Activated T-helper 2 cell treated with anti-CD3 and anti-CD28 coated beads, Interferon-gamma antibody, Interleukin-2, Interleukin-4, amounts not matched to agents 10 μg/mL and 5 μg/mL and 100 μg/mL, durations not matched to agents 14 hours and 24 hours and 36 hours (primary cell): ENCODE measurements at regions of chr10 and their contacts with region 1.

Region 1: GRCh38 chr10:119596537-119597404 is at the start of gene TIAL1:
- DNase-seq: peak; percentile 89
- H3K4me3 Mint-ChIP-seq: peak within 1 kb of the TSS; percentile 95
- H3K27ac Mint-ChIP-seq: peak within 1 kb of the TSS; percentile 95
- H3K4me1 Mint-ChIP-seq: peaks cover 42% of the 10 kb centered on the region
- H3K27me3 Mint-ChIP-seq: no peaks in the 10 kb centered on the region
- total RNA-seq, gene TIAL1: 183 and 184 TPM in 2 replicates

Region 2: GRCh38 chr10:119080521-119081260 is 516.1 kb before region 1 on chr10 and contains the start of gene EIF3A:
- intact Hi-C with region 1: loop called (anchors 1 kb)
- DNase-seq: peak; percentile 94
- H3K4me3 Mint-ChIP-seq: peak within 1 kb of the TSS; percentile 93
- H3K27ac Mint-ChIP-seq: peak within 1 kb of the TSS; percentile 93
- H3K4me1 Mint-ChIP-seq: peaks cover 35% of the 10 kb centered on the region
- H3K27me3 Mint-ChIP-seq: no peaks in the 10 kb centered on the region
- total RNA-seq, gene EIF3A: 161 and 164 TPM in 2 replicates

Region 3: DNA sequence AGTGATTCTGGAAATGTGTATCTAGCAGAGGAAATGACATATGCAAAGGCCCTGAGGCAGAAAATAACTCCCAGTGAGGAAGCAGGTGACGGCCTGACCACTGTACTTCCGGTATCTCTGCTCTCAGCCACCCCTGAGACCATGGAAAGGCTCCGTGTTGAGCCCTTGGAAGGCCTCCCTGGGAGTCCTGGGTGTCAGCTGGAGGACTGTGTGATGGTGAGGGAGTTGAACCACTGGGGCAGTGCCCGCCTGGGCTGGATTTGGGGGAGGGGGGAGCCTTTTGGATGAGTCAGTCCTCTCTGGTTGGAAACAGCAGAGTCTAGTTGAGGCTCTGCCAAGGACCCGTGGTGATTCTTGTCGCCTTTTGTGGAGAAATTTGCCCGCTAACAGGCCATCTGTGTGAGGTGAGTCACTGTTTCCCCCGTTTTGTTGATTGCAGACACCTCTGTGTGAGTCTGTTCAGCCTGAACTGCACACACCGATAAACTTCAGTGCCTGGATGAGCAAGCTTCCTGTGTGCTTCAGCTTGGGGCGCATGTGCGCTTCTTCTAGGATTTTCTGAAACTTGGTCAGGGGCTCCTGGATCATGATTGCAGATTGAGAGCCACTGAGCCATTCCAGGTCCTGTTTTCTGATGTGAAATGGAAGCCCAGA is 290.8 kb before region 1 on chr10:
- intact Hi-C with region 1: loop called (anchors 5 kb)
- DNase-seq: peak; percentile 85
- H3K4me3 Mint-ChIP-seq: peak overlapping the region; percentile 74
- H3K27ac Mint-ChIP-seq: peak overlapping the region; percentile 100
- H3K4me1 Mint-ChIP-seq: peaks cover 70% of the 10 kb centered on the region
- H3K27me3 Mint-ChIP-seq: peaks cover 4% of the 10 kb centered on the region

Region 4: GRCh38 chr10:119542988-119543813 is 53.6 kb before region 1 on chr10:
- intact Hi-C with region 1: loop called (anchors 1 kb)
- DNase-seq: peak; percentile 52
- H3K4me3 Mint-ChIP-seq: peak overlapping the region; percentile 88
- H3K27ac Mint-ChIP-seq: peak overlapping the region; percentile 86
- H3K4me1 Mint-ChIP-seq: peaks cover 39% of the 10 kb centered on the region
- H3K27me3 Mint-ChIP-seq: peaks cover 18% of the 10 kb centered on the region

Region 5: DNA sequence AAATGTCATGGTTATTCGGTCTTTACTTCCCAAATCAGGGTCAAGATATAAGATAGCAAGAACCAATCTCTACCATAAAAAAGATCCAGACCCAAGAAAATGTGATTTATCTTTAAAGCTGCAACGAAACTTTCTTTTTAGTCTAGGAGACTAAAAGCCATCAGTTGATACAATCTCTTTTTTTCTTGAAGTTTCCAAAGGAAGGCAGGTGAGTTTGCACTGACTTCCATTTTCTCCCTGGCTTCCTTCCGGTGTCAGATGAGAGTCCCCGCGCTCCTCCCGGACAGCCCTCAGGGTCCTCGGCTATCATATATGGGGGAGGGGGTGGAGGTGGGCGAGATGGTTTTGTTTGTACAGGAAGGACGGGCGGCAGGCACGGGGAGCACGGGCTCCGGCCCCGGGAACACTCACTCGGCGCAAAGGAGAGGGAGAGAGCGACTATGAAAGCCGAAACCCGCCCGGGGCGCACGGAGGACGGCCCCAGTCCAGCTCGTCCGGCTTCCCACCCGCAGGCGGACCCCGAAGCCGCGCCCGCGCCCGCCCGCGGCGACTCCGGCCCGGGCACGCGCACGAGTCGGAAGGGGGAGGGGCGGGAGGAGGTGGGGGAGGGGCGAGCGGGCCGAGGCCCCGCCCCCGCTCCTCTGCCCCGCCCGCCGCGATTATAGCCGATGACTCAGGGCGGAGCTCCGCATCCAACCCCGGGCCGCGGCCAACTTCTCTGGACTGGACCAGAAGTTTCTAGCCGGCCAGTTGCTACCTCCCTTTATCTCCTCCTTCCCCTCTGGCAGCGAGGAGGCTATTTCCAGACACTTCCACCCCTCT is 54.1 kb after region 1 on chr10 and contains the start of gene BAG3:
- intact Hi-C with region 1: loop called (anchors 1 kb)
- DNase-seq: peak; percentile 73
- H3K4me3 Mint-ChIP-seq: peak within 1 kb of the TSS; percentile 96
- H3K27ac Mint-ChIP-seq: peak within 1 kb of the TSS; percentile 95
- H3K4me1 Mint-ChIP-seq: peaks cover 45% of the 10 kb centered on the region
- H3K27me3 Mint-ChIP-seq: peaks cover 9% of the 10 kb centered on the region
- total RNA-seq, gene BAG3: 31.8 and 33.3 TPM in 2 replicates

Region 6: DNA sequence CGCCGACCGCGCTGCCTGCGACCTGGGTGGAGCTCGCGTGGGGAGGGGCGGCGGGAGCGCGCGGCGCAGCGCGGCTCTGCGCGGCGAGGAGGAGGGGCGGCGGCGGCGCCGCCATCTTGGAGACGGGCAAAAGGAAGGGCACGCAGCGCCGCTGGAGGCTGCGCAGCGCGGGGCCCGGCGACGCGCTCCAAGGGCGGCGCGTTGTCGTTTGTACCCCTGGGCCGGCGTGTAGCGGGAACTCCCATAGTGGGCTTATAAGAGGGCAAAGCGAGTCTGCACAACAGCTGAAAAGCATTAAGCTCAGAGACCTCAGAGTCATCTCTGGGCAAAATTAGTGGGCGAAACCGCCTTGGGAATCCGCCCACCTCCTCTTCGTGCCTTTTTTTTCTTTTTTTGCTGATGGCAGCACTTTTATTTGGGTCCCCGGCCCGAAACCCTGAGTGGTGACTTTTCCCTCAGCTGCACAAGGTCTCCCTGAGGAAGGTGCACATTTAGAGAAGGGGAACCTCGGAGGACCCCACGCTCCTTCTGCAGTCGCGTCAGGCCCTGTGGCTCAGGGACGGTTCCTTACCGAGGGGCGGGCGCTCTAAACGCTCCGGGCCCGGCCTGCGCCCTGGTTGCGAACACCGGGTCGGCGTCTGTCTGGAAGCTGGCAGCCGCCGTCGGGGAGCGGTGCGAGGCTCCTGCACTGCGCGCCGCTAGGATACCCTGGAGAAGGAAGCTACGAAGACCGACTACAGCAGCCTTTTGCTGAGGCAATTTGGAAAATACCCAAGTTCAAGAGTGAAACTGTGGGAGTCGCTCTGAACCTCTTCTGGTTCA is 276.3 kb after region 1 on chr10:
- intact Hi-C with region 1: loop called (anchors 2 kb)
- DNase-seq: peak; percentile 84
- H3K4me3 Mint-ChIP-seq: peak overlapping the region; percentile 84
- H3K27ac Mint-ChIP-seq: peak overlapping the region; percentile 77
- H3K4me1 Mint-ChIP-seq: peaks cover 30% of the 10 kb centered on the region
- H3K27me3 Mint-ChIP-seq: no peaks in the 10 kb centered on the region